ENCODE measurements at regions of chr22 and their contacts with region 1.

Region 1: GRCh38 chr22:41940832-41941765 is 5.9 kb downstream of the CENPM start:
- DNase-seq: peak; percentile 90
- ATAC-seq: peak; percentile 61
- H3K4me3 Mint-ChIP-seq: peak overlapping the region; percentile 27
- H3K27ac Mint-ChIP-seq: peak overlapping the region; percentile 95
- H3K4me1 Mint-ChIP-seq: peaks cover 58% of the 10 kb centered on the region
- H3K27me3 Mint-ChIP-seq: no peaks in the 10 kb centered on the region

Region 2: GRCh38 chr22:41746567-41747400 is 194.3 kb before region 1 on chr22:
- CTCF ChIA-PET with region 1: interaction called, 28 read pairs
- POLR2A ChIA-PET with region 1: interaction called, 3 read pairs
- DNase-seq: peak; percentile 63
- ATAC-seq: peak; percentile 90
- H3K4me3 Mint-ChIP-seq: no peak overlapping the region
- H3K27ac Mint-ChIP-seq: no peak overlapping the region
- H3K4me1 Mint-ChIP-seq: no peaks in the 10 kb centered on the region
- H3K27me3 Mint-ChIP-seq: peaks cover 30% of the 10 kb centered on the region

Region 3: GRCh38 chr22:41800348-41801146 is 140.6 kb before region 1 on chr22 and contains the start of gene CCDC134:
- CTCF ChIA-PET with region 1: interaction called, 15 read pairs
- POLR2A ChIA-PET with region 1: interaction called, 12 read pairs
- DNase-seq: peak; percentile 94
- ATAC-seq: peak; percentile 98
- H3K4me3 Mint-ChIP-seq: peak within 1 kb of the TSS; percentile 98
- H3K27ac Mint-ChIP-seq: peak within 1 kb of the TSS; percentile 99
- H3K4me1 Mint-ChIP-seq: peaks cover 43% of the 10 kb centered on the region
- H3K27me3 Mint-ChIP-seq: no peaks in the 10 kb centered on the region
- total RNA-seq, gene CCDC134: 20.3 to 20.9 TPM

Region 4: GRCh38 chr22:41832553-41833368 is 108.3 kb before region 1 on chr22 and contains the start of gene SREBF2:
- CTCF ChIA-PET with region 1: interaction called, 8 read pairs
- POLR2A ChIA-PET with region 1: interaction called, 14 read pairs
- DNase-seq: peak; percentile 100
- ATAC-seq: peak; percentile 95
- H3K4me3 Mint-ChIP-seq: peak within 1 kb of the TSS; percentile 95
- H3K27ac Mint-ChIP-seq: peak within 1 kb of the TSS; percentile 100
- H3K4me1 Mint-ChIP-seq: peaks cover 41% of the 10 kb centered on the region
- H3K27me3 Mint-ChIP-seq: no peaks in the 10 kb centered on the region
- total RNA-seq, gene SREBF2: 93.0 to 93.7 TPM

Region 5: GRCh38 chr22:41925655-41926460 is 15.2 kb before region 1 on chr22:
- CTCF ChIA-PET with region 1: interaction called, 47 read pairs
- POLR2A ChIA-PET with region 1: interaction called, 10 read pairs
- DNase-seq: peak; percentile 78
- ATAC-seq: peak; percentile 88
- H3K4me3 Mint-ChIP-seq: peak overlapping the region; percentile 54
- H3K27ac Mint-ChIP-seq: no peak overlapping the region
- H3K4me1 Mint-ChIP-seq: peaks cover 8% of the 10 kb centered on the region
- H3K27me3 Mint-ChIP-seq: peaks cover 10% of the 10 kb centered on the region

Measured in activated CD8-positive, alpha-beta T cell treated with anti-CD3 and anti-CD28 coated beads, Interleukin-2, amount 10 ng/mL, durations not matched to agents 7 days and 5 days (primary cell).